ENCODE measurements at regions of chr1 and their contacts with region 1.

Region 1: DNA sequence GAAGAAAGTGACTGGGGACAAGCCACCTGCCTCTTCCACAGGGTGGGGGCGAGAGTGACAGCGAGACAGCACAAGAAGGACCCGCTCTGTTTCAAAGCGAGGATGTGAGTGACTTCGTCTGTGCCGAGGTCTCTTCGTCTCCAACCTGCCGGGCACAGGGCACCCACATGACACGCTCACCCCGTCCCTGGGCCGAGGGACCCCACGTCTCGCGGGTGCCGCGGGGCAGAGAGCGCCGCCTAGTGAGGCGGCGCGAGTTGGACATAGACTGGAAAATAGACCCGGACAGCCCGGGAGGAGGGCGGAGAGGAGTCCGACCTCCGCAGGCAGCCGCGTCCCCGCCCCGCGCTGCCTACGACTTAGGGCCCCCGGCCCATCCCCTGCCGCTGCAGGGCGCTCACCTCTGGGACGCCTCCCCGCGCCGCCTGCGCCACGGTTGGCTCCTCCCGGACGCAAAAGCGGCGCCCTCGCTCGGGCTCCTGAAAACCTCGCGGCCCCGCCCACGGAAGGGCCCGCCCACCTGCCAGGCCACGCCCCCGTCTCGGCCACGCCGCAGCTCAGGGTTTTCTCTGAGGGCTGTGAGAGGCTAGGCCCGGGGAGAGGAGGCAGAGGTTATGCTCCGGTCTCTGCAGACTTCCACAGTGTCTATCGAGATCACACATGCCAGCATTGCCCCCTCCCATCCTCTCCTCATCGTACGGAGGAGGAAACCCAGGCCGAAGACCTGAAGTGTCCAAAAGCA is at the start of gene TLR5:
- DNase-seq: peak; percentile 81 to 92 (median 87)
- ATAC-seq: peak; percentile 94
- H3K4me3 ChIP-seq: peak within 1 kb of the TSS; percentile 65
- H3K4me3 Mint-ChIP-seq: peak within 1 kb of the TSS; percentile 69 to 89 (median 81)
- H3K27ac ChIP-seq: peak within 1 kb of the TSS; percentile 69
- H3K27ac Mint-ChIP-seq: peak within 1 kb of the TSS in 8 of 9 donors; percentile 48 to 95 (median 90)
- H3K4me1 ChIP-seq: peaks cover 13 to 15% of the 10 kb centered on the region in 2 donors
- H3K4me1 Mint-ChIP-seq: peaks cover 13 to 35% (median 27%) of the 10 kb centered on the region in 7 donors
- H3K27me3 ChIP-seq: no peaks in the 10 kb centered on the region
- H3K27me3 Mint-ChIP-seq: peaks cover 0 to 10% (median 0%) of the 10 kb centered on the region in 5 donors
- total RNA-seq, gene TLR5: 3.1 to 8.0 (median 6.6) TPM in 4 of 5 experiments, not detected in the other

Region 2: DNA sequence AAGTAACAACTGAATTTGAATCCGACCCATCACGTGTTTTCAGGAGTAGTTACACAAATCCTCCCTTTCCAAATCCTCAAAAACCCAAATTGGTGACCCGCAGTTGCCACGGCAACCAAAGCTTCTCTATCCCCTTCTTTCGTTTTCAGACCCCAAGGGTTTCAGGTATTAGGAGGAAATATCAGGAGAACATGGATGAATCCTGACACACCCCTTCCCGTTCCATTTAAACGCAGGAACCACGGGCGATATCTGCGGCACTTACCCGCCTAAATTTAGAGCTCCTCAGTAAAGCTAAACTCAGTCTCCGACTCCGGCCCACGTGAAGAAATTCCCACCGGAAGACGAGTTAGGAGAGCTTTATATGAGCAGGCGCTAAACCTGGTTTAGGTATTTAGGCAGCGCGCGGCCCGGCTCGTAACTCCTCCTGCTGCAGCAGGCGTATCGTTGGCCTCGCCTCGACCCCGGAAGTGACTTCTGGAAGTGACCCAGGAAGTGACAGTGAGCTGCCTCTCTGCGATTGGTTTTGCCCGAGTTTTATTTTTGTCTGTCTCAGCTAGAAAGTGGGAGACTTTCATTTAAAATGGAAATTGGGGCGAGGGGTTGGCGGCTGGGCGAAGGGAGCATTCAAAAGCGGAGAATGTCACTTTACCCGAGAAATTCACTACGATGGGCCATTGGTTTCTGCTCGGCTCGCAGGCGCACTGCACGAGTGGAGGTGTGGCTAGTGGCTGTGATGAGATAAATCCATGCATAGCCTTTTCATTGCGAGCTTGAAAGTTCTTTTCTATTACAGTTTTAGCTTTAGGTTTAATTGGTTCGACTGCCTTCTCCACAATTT is 553.3 kb before region 1 on chr1 and contains the start of gene TAF1A:
- CTCF ChIA-PET with region 1: no interaction called
- POLR2A ChIA-PET with region 1: no interaction called
- intact Hi-C with region 1: loop called in 1 of 2 experiments (anchors 1 kb)
- DNase-seq: peak; percentile 53 to 92 (median 87)
- ATAC-seq: peak; percentile 100
- H3K4me3 ChIP-seq: peak within 1 kb of the TSS; percentile 93
- H3K4me3 Mint-ChIP-seq: peak within 1 kb of the TSS; percentile 86 to 99 (median 96)
- H3K27ac ChIP-seq: peak within 1 kb of the TSS; percentile 85
- H3K27ac Mint-ChIP-seq: peak within 1 kb of the TSS; percentile 94 to 99 (median 97)
- H3K4me1 ChIP-seq: peaks cover 6 to 18% of the 10 kb centered on the region in 2 donors
- H3K4me1 Mint-ChIP-seq: peaks cover 21 to 68% (median 57%) of the 10 kb centered on the region in 7 donors
- H3K27me3 ChIP-seq: no peaks in the 10 kb centered on the region
- H3K27me3 Mint-ChIP-seq: peaks cover 0 to 4% (median 0%) of the 10 kb centered on the region in 5 donors
- total RNA-seq, gene TAF1A: 6.5 to 17.9 (median 9.3) TPM

Region 3: DNA sequence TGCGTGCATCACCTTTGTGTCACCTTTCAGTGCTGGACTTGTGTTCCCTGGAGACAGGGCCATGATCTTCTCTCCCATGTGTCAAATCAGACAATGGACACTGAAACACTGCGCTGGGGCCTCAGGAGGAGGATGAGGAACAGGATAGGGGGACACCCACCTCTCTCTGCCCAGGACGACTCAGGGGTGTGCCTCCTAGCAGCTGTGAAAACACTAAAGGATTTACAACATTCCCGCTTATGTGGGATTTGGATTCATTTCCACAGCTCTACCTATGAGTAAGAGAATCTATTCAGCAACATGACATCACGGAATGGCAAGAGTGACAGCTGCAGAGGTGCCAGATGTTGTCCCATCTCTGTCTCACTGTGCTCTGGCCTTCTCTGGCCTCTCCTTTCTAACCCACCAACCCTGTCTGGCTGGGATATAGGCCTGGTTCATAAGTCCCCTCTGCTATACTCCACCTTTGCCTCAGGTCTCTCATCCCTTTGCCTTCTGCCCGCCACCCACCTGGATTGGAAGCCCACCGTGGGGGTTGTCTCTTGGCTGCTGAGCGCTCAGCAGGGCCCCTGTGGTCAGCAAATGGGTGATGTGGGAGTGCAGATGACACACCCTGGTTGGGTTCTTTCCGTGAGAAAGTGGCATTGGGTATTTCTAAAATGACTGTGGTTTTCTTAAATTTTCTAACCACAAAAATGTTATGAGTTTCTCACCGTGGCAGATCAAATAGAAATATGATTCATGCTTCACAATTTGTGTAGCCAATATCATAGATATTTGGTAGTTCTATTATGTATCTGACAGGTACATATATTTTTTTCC is 47.1 kb after region 1 on chr1:
- CTCF ChIA-PET with region 1: interaction called, 3 read pairs
- POLR2A ChIA-PET with region 1: interaction called, 4 read pairs
- intact Hi-C with region 1: loop called in 1 of 2 experiments (anchors 2 kb)
- DNase-seq: peak in 7 of 9 donors; percentile 5 to 57 (median 13)
- ATAC-seq: peak; percentile 79
- H3K4me3 ChIP-seq: no peak overlapping the region
- H3K4me3 Mint-ChIP-seq: peak overlapping the region; percentile 8 to 76 (median 62)
- H3K27ac ChIP-seq: no peak overlapping the region
- H3K27ac Mint-ChIP-seq: peak overlapping the region; percentile 25 to 90 (median 61)
- H3K4me1 ChIP-seq: peaks cover 9 to 29% of the 10 kb centered on the region in 2 donors
- H3K4me1 Mint-ChIP-seq: peaks cover 10 to 70% (median 63%) of the 10 kb centered on the region in 7 donors
- H3K27me3 ChIP-seq: no peaks in the 10 kb centered on the region
- H3K27me3 Mint-ChIP-seq: peaks cover 0 to 17% (median 0%) of the 10 kb centered on the region in 5 donors

Region 4: GRCh38 chr1:223233410-223234169 is 90.6 kb after region 1 on chr1:
- CTCF ChIA-PET with region 1: no interaction called
- POLR2A ChIA-PET with region 1: interaction called, 4 read pairs
- intact Hi-C with region 1: loop called in 1 of 2 experiments (anchors 1 kb)
- DNase-seq: peak in 1 of 9 donors; percentile 18
- ATAC-seq: no peak
- H3K4me3 ChIP-seq: no peak overlapping the region
- H3K4me3 Mint-ChIP-seq: peak overlapping the region in 5 of 10 donors; percentile 4 to 58 (median 24)
- H3K27ac ChIP-seq: peak overlapping the region; percentile 27
- H3K27ac Mint-ChIP-seq: peak overlapping the region in 8 of 9 donors; percentile 19 to 99 (median 80)
- H3K4me1 ChIP-seq: peaks cover 8 to 64% of the 10 kb centered on the region in 2 donors
- H3K4me1 Mint-ChIP-seq: peaks cover 18 to 82% (median 74%) of the 10 kb centered on the region in 7 donors
- H3K27me3 ChIP-seq: no peaks in the 10 kb centered on the region
- H3K27me3 Mint-ChIP-seq: peaks cover 0 to 4% (median 0%) of the 10 kb centered on the region in 5 donors

Measured in naive thymus-derived CD4-positive, alpha-beta T cell (primary cell).